ENCODE measurements at regions of chr2 and their contacts with region 1.

Region 1: GRCh38 chr2:237451643-237452469 is 35.2 kb upstream of the MLPH start:
- DNase-seq: no peak
- H3K4me3 ChIP-seq: no peak overlapping the region
- H3K27me3 ChIP-seq: no peaks in the 10 kb centered on the region
- CTCF ChIP-seq: peak; percentile 73

Region 2: GRCh38 chr2:237421542-237422116 is 30.2 kb before region 1 on chr2:
- CTCF ChIA-PET with region 1: interaction called, 51 read pairs
- POLR2A ChIA-PET with region 1: no interaction called
- DNase-seq: no peak
- H3K4me3 ChIP-seq: no peak overlapping the region
- H3K27me3 ChIP-seq: no peaks in the 10 kb centered on the region
- CTCF ChIP-seq: peak; percentile 95

Region 3: GRCh38 chr2:237434866-237435311 is 17.0 kb before region 1 on chr2:
- CTCF ChIA-PET with region 1: interaction called, 14 read pairs
- POLR2A ChIA-PET with region 1: no interaction called
- DNase-seq: no peak
- H3K4me3 ChIP-seq: no peak overlapping the region
- H3K27me3 ChIP-seq: no peaks in the 10 kb centered on the region
- CTCF ChIP-seq: no peak

Region 4: DNA sequence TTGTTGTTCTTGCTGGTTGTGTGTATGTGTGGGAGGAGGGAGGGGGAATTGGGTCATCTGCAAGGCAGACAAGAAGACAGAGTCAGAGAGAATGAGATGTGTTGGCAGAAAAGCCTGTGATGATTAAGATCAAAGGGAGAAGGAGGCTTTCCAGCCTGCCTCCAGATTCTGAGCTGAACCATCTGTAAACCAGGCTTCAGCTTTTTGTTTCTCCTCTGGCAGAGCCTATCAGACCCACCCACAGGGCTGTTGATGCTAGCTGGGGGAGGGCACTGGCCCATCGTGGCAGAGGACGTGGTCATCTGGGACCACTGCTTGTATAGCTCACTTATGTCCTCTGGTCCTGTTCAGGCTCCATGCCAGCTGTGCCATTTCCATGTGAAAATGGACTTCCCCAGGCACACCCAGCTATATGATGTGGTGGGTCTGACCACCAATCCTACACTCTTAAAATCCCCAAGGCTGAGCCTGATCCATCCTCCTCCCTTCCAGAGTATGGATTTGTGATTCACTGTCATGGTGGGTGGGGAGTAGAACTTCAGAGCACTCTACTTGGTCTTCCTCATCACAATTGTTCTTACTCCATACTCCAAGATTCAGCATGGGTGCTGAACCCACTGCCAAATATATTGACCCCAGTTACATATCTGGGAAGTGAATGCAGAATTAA is 10.1 kb before region 1 on chr2:
- CTCF ChIA-PET with region 1: interaction called, 17 read pairs
- POLR2A ChIA-PET with region 1: interaction called, 3 read pairs
- DNase-seq: no peak
- H3K4me3 ChIP-seq: no peak overlapping the region
- H3K27me3 ChIP-seq: no peaks in the 10 kb centered on the region
- CTCF ChIP-seq: no peak

Region 5: DNA sequence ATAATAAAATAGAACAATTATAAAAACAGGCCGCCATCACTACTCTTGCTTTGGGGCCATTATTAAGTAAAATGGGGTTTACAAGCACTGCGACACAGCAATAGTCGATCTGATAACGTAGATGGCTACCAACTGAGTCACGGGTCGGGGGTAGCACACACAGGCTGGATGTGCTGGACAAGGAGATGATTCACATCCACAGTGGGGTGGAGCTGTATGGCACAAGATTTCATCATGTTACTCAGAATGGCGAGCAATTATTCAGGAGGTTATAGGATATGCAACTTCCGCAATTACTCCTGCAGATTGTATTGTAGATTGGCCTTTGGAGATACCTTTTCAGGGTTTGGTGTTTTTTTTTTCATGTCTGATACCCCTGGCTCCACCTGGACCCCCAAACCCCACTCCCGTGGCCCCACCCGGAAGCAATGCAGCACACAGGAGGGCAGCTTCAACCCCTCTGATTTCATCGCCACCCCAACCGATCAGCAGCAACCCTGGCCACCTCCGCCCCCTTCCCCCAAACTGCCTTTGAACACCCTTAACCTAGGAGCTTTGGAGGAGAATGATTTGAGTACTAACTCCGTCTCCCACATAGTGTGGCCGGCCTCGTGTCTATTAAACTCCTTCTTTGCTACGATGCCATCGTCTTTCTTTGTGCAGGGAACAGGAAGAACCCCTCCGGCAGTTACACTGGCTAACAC is 13.8 kb after region 1 on chr2:
- CTCF ChIA-PET with region 1: interaction called, 25 read pairs
- POLR2A ChIA-PET with region 1: interaction called, 3 read pairs
- DNase-seq: peak; percentile 86
- H3K4me3 ChIP-seq: no peak overlapping the region
- H3K27me3 ChIP-seq: no peaks in the 10 kb centered on the region
- CTCF ChIP-seq: no peak

Region 6: GRCh38 chr2:237714690-237715458 is 263.0 kb after region 1 on chr2:
- CTCF ChIA-PET with region 1: no interaction called
- POLR2A ChIA-PET with region 1: no interaction called
- DNase-seq: no peak
- H3K4me3 ChIP-seq: no peak overlapping the region
- H3K27me3 ChIP-seq: no peaks in the 10 kb centered on the region
- CTCF ChIP-seq: no peak

Measured in BJ (cell line).